ENCODE measurements at regions of chr2 and their contacts with region 1.

Region 1: DNA sequence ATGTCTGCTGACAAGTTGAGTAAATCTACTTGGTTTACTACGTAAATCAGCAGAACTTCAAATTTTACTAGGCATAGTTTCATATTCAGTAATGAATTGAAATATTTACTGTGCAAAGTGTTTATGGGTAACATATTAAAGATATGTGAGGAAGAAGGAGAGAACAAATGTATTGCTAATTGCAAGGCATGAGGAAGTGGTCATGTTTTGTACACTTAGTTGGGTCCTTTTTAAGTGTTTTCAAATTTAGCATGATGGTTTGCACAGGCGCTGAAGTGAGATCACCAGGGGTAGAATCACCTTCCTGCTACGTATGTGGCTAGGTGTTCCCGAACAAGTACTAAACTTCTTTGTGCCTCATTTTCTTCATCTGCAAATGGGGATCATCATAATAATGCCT is 1534.4 kb downstream of the LRP1B start:
- DNase-seq: no peak
- H3K4me3 ChIP-seq: no peak overlapping the region
- H3K27ac ChIP-seq: no peak overlapping the region
- H3K4me1 ChIP-seq: no peaks in the 10 kb centered on the region
- H3K27me3 ChIP-seq: no peaks in the 10 kb centered on the region
- CTCF ChIP-seq: no peak
- POLR2A ChIP-seq: no peak

Region 2: DNA sequence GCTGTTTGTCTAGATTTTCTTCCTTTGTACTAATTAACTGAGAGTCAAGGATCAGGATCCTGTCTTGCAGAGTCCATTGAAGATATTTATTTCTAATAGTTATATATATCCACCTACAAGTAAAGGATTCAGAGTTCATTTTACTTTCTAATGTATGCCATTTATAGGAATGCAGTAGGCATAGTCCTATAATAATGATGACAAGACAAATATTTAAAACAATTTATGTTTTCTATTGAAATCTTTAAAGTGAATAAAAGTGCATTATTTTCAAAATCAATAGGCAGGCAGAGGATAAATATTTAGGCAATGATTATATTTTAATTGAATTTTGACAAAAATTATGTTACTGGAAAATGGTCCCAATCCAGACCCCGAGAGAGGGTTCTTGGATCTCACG is 385.5 kb before region 1 on chr2:
- CTCF ChIA-PET with region 1: no interaction called
- POLR2A ChIA-PET with region 1: no interaction called
- dilution Hi-C with region 1: no loop called
- intact Hi-C with region 1: no loop called
- DNase-seq: no peak
- H3K4me3 ChIP-seq: no peak overlapping the region
- H3K27ac ChIP-seq: no peak overlapping the region
- H3K4me1 ChIP-seq: no peaks in the 10 kb centered on the region
- H3K27me3 ChIP-seq: no peaks in the 10 kb centered on the region
- CTCF ChIP-seq: no peak
- POLR2A ChIP-seq: no peak

Region 3: GRCh38 chr2:140586379-140586778 is 10.1 kb before region 1 on chr2:
- CTCF ChIA-PET with region 1: interaction called, 10 read pairs
- POLR2A ChIA-PET with region 1: no interaction called
- dilution Hi-C with region 1: no loop called
- intact Hi-C with region 1: no loop called
- DNase-seq: peak; percentile 42
- H3K4me3 ChIP-seq: no peak overlapping the region
- H3K27ac ChIP-seq: no peak overlapping the region
- H3K4me1 ChIP-seq: no peaks in the 10 kb centered on the region
- H3K27me3 ChIP-seq: no peaks in the 10 kb centered on the region
- CTCF ChIP-seq: peak; percentile 49 to 67
- POLR2A ChIP-seq: no peak

Region 4: DNA sequence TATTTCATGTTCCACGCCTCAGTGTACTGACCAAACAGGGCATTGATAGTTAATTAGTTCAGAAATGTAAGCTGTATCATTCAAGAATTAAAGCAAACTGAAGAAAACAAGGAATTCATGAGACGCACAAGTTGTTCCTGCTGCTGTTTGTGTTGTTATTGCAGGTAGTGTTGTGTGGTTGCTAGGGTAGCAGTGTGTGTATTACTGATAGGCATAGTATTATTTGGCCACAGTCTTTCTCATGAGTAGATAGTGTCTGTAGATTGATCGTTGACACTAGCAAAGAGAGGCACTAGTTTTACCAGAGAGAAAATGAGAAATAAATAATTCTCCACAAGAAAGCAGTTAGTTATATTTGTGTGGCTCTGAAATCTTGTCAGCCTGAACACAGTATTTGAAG is 985.8 kb after region 1 on chr2:
- CTCF ChIA-PET with region 1: no interaction called
- POLR2A ChIA-PET with region 1: no interaction called
- dilution Hi-C with region 1: no loop called
- intact Hi-C with region 1: no loop called
- DNase-seq: no peak
- H3K4me3 ChIP-seq: no peak overlapping the region
- H3K27ac ChIP-seq: no peak overlapping the region
- H3K4me1 ChIP-seq: no peaks in the 10 kb centered on the region
- H3K27me3 ChIP-seq: no peaks in the 10 kb centered on the region
- CTCF ChIP-seq: no peak
- POLR2A ChIP-seq: no peak

Measured in endothelial cell of umbilical vein (primary cell).